PC-9 (cell line): ENCODE measurements at regions of chr15 and their contacts with region 1.

Region 1: DNA sequence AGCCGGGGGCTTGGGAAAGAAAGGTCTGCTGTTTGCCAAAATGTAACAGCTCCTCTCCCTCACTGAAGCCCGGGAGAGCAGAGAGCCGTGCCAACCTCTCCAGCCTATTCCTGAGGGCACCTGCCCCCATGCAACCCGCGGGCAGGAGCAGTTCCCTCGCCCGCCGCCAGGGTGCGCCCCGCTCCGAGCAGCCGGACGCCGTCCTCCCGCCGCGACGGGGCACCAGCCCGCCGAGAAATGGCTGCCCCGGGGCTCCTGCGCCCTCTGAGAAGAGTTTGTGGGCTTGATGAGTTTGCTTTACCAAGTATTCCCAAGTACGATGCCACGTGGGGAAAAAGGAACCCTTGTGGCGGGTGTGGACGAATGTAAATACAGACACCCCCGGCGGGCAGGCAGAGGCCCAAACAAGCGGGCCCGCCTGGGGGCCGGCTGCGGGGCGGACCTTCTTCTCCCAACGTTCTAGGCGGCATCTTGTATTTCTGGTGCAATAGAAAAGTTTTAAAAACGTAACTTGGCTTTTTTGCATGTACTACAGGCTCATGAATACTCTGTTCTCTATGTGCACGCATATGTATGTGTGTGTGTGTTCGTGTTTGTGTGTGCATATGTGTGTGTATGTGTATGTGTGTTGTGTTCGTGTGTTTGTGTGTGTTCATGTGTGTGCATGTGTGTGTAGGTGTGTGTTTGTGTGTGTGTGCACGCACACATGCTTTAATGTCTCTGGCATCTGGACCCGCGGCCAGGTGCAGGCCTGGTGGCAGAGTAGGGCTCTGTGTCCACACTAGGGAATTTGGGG is 162.9 kb downstream of the CHSY1 start:
- DNase-seq: peak in 1 of 2 experiments; percentile 78
- H3K4me3 ChIP-seq: no peak overlapping the region; the same call in 1 of the 2 replicates
- H3K27ac ChIP-seq: no peak overlapping the region
- H3K4me1 ChIP-seq: no peaks in the 10 kb centered on the region
- H3K27me3 ChIP-seq: no peaks in the 10 kb centered on the region
- CTCF ChIP-seq: peak; percentile 96

Region 2: GRCh38 chr15:100725101-100725762 is 363.8 kb before region 1 on chr15:
- CTCF ChIA-PET with region 1: no interaction called
- POLR2A ChIA-PET with region 1: no interaction called
- intact Hi-C with region 1: no loop called
- DNase-seq: no peak
- H3K4me3 ChIP-seq: no peak overlapping the region
- H3K27ac ChIP-seq: peak overlapping the region; percentile 100
- H3K4me1 ChIP-seq: peaks cover 62% of the 10 kb centered on the region
- H3K27me3 ChIP-seq: no peaks in the 10 kb centered on the region
- CTCF ChIP-seq: no peak

Region 3: GRCh38 chr15:101258238-101259144 is 169.5 kb after region 1 on chr15:
- CTCF ChIA-PET with region 1: no interaction called
- POLR2A ChIA-PET with region 1: no interaction called
- intact Hi-C with region 1: loop called (anchors 1 kb)
- DNase-seq: peak in 1 of 2 experiments; percentile 48
- H3K4me3 ChIP-seq: no peak overlapping the region
- H3K27ac ChIP-seq: no peak overlapping the region
- H3K4me1 ChIP-seq: no peaks in the 10 kb centered on the region
- H3K27me3 ChIP-seq: peaks cover 11% of the 10 kb centered on the region
- CTCF ChIP-seq: peak; percentile 88